CD14-positive monocyte (primary cell): ENCODE measurements at regions of chr12 and their contacts with region 1.

Region 1: GRCh38 chr12:53701518-53702260 is 25.6 kb downstream of the CALCOCO1 start:
- DNase-seq: peak; percentile 48 to 70 (median 52)
- H3K4me3 ChIP-seq: no peak overlapping the region
- H3K4me3 Mint-ChIP-seq: peak overlapping the region in 1 of 2 donors; percentile 20
- H3K27ac ChIP-seq: no peak overlapping the region
- H3K27ac Mint-ChIP-seq: peak overlapping the region in 1 of 7 donors; percentile 64
- H3K4me1 ChIP-seq: peaks cover 3% of the 10 kb centered on the region in 2 donors
- H3K4me1 Mint-ChIP-seq: peaks cover 13% of the 10 kb centered on the region
- H3K27me3 ChIP-seq: peaks cover 74 to 83% of the 10 kb centered on the region in 2 donors
- H3K27me3 Mint-ChIP-seq: peaks cover 81 to 91% (median 84%) of the 10 kb centered on the region in 3 donors
- CTCF ChIP-seq: peak; percentile 93

Region 2: DNA sequence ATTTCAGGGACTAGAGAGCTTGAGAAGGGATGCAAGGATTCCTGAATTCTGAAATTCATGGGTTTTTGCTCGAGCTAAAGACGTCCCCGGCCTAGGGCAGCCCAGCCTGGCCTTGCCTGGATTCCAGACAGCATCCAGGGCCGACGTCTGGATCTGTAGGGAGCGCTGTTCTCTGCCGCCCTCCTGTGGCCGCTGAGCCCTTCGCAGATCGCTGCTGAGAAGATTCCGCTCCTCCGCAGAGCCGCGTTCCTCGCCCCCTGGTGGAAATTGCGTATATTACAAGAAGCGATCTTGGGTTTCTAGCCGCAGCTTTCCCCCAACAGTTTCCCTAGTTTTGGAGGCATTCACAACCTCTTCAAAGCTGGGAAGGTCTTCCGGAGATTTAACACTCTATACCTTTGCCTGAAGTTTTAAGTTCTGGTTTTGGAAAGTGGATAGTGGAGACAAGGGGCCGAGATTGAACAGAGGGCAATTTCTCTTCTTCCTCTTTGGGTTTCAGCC is 45.0 kb after region 1 on chr12:
- intact Hi-C with region 1: loop called (anchors 1 to 2 kb)
- DNase-seq: peak; percentile 83 to 86 (median 85)
- H3K4me3 ChIP-seq: no peak overlapping the region
- H3K4me3 Mint-ChIP-seq: peak overlapping the region; percentile 17 to 81
- H3K27ac ChIP-seq: no peak overlapping the region
- H3K27ac Mint-ChIP-seq: peak overlapping the region in 1 of 7 donors; percentile 35
- H3K4me1 ChIP-seq: peaks cover 9 to 21% of the 10 kb centered on the region in 2 donors
- H3K4me1 Mint-ChIP-seq: peaks cover 15% of the 10 kb centered on the region
- H3K27me3 ChIP-seq: peaks cover 53 to 91% of the 10 kb centered on the region in 2 donors
- H3K27me3 Mint-ChIP-seq: peaks cover 0 to 39% (median 34%) of the 10 kb centered on the region in 3 donors
- CTCF ChIP-seq: peak; percentile 100

Region 3: DNA sequence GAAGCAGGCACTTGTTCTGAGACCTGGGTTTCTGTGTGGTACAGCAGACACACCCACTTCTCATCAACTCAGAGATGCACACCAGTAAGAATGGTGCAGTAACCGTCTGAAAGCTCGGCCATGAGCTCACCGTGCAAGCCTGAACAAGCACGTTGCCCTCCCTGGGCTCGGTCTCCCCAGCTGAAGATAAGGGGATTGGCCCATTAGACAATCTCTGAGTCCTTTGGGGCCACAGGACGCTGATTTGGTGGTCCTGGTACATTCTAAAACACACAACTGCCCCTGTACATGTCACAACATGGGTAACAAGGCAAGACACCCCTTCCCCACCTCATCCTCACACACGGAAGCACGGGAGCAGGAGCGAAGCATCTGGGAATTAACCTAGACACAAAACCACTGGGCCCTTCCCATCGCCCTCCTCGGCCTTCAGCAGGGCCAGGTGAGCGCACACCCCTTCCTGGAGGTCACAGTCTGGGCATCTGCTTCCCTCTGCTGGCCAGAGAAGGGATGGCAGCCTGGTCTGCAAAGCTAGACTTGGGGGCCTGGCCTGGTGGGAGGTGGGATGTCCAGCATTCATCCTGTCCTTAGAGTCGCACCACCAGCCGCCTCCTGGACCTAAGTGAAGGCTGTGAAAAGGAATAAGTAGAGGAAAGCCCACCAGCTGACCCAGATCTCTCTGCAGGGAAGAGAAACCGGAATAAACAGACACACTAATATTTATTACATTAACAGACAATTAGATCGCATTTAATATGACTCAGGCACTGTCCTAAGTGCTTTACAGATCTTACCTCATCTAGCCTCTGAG is 506.0 kb after region 1 on chr12:
- intact Hi-C with region 1: loop called in 1 of 2 experiments (anchors 10 kb)
- DNase-seq: peak in 2 of 3 donors; percentile 54 to 60
- H3K4me3 ChIP-seq: no peak overlapping the region
- H3K4me3 Mint-ChIP-seq: no peak overlapping the region
- H3K27ac ChIP-seq: no peak overlapping the region
- H3K27ac Mint-ChIP-seq: no peak overlapping the region
- H3K4me1 ChIP-seq: no peaks in the 10 kb centered on the region
- H3K4me1 Mint-ChIP-seq: no peaks in the 10 kb centered on the region
- H3K27me3 ChIP-seq: peaks cover 4 to 57% of the 10 kb centered on the region in 2 donors
- H3K27me3 Mint-ChIP-seq: peaks cover 57 to 76% (median 71%) of the 10 kb centered on the region in 3 donors
- CTCF ChIP-seq: peak; percentile 98